Activated naive CD4-positive, alpha-beta T cell treated with anti-CD3 and anti-CD28 coated beads for 36 hours (primary cell): ENCODE measurements at regions of chr20 and their contacts with region 1.

Region 1: DNA sequence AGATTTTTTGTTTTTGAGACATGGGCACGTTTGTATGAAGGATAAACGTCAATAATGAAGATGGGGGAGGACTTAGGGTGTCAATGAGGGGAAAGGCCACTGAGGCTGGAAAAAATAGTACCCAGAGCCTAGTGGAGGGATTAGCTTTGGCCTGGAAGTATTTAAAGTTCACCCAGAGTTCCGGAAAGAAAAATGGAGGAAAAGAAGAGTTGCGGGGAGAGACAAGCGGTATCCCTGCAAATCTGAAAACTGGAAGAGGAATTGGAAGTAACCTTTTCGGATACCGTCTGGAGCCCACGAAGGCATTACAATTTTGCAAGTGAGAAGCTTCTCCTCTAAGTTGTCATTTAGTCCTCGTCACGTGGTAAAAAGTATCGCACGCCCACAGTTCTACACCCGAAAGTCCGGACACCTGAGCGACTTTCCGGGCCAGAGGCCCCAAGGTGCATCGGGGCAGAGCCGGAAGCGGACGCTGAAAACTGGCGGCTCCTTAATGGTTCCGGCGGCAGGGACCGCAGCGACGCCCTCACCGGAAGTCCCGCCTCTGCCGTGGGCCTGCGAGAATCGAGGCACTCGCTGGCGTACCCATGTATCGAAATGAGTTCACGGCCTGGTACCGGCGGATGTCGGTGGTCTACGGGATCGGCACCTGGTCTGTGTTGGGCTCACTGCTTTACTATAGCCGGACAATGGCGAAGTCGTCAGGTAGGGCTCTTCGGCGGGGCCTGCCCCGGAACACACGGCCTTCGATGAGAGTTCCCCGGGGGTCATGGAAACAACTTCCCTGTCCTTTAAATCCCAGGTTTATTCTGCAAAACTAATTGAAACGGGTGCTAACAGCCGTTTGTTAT is at the start of gene SMIM26:
- DNase-seq: peak; percentile 95
- H3K4me3 Mint-ChIP-seq: peak within 1 kb of the TSS; percentile 94
- H3K27ac Mint-ChIP-seq: peak within 1 kb of the TSS; percentile 95
- H3K4me1 Mint-ChIP-seq: peaks cover 19% of the 10 kb centered on the region
- H3K27me3 Mint-ChIP-seq: no peaks in the 10 kb centered on the region
- total RNA-seq, gene SMIM26: 57.3 to 60.0 TPM

Region 2: DNA sequence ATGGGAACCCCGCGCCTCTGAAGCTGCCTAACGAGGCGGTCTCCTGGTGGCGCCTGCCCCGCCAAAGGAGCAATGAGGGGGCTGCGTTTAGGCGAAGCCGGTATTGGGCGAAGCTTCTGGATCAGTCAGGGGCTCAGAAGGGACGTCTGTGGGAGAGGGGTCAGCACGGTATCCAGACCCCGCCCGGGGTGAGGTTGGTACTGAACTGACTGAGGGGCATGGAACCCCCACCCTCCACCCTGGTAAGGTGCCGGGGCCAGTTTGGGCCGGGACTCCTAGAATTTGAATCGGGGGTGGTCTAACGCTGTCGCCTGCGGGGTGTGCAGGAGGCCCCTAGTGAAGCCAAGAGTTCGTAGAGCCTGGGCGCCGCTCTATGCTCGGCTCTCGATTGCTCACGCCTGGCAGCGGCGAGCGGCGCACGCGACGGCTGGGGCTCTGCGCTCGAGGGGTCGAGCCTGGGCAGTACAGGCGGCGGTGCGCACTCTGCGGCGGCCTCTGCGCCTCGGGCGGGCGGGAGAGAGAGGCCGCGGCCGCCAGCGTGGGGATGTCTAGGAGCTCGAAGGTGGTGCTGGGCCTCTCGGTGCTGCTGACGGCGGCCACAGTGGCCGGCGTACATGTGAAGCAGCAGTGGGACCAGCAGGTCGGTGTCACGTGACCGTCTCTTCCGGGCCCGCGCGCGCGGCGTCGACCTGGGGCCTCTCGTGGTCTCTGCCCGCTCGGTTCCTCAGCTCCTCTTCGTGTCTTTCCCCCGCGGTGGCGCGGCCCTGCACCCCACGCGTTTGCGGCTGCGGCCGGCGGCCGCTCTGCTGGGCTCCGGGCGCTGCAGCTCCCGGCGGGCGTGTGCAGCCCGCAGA is 429.5 kb before region 1 on chr20 and contains the starts of genes KAT14 and PET117:
- CTCF ChIA-PET with region 1: no interaction called
- intact Hi-C with region 1: loop called (anchors 1 kb)
- DNase-seq: peak; percentile 91
- H3K4me3 Mint-ChIP-seq: peak within 1 kb of the TSS; percentile 75
- H3K27ac Mint-ChIP-seq: peak within 1 kb of the TSS; percentile 77
- H3K4me1 Mint-ChIP-seq: peaks cover 30% of the 10 kb centered on the region
- H3K27me3 Mint-ChIP-seq: no peaks in the 10 kb centered on the region
- total RNA-seq, gene KAT14: 10.3 to 12.9 TPM
- total RNA-seq, gene PET117: 16.7 to 17.9 TPM

Region 3: GRCh38 chr20:18496740-18497592 is 70.2 kb before region 1 on chr20 and contains the start of gene RBBP9:
- CTCF ChIA-PET with region 1: no interaction called
- intact Hi-C with region 1: loop called (anchors 1 kb)
- DNase-seq: peak; percentile 88
- H3K4me3 Mint-ChIP-seq: peak within 1 kb of the TSS; percentile 91
- H3K27ac Mint-ChIP-seq: peak within 1 kb of the TSS; percentile 84
- H3K4me1 Mint-ChIP-seq: peaks cover 11% of the 10 kb centered on the region
- H3K27me3 Mint-ChIP-seq: no peaks in the 10 kb centered on the region
- total RNA-seq, gene RBBP9: 17.3 to 18.1 TPM

Region 4: DNA sequence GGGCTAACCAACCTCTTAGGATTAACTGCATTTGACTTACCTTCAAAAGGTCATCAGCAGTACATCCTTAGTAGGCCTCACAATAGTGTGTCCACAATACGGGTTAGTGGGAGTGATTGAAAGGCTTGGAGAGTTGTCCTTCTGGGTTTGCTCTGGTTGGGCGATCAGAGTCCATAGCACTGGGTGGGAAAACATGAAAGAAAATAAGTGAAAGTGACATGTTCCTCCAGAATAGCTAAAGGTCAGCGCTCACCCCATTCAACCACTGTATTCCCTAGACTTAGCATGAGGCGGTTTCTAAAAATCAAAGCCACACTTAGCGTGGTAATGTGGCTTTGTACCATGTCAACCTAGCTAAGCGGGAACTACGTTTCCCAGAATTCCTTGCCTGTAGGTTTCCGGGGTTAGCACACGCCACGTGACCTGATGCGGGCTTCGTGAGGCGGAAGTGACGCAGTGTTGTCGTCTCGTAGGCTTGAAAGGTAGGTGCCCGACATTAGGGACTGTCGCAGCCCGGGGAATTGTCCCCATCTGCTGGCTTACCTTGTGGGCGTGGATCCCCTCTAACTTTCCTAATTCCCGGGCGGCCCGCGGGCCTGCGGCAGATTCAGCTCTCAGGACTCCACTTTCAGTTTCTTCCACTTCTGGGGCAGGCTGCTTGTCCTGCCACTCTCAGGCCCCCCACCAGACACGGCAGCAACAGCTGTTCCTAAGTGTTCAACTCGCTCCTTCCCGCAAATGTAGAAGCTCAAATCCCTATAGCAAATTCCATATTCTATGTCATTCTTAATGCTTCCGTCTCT is 226.7 kb after region 1 on chr20:
- CTCF ChIA-PET with region 1: no interaction called
- intact Hi-C with region 1: loop called (anchors 1 kb)
- DNase-seq: peak; percentile 93
- H3K4me3 Mint-ChIP-seq: peak overlapping the region; percentile 91
- H3K27ac Mint-ChIP-seq: peak overlapping the region; percentile 94
- H3K4me1 Mint-ChIP-seq: peaks cover 12% of the 10 kb centered on the region
- H3K27me3 Mint-ChIP-seq: peaks cover 8% of the 10 kb centered on the region

Region 5: GRCh38 chr20:20052074-20052970 is 1485.2 kb after region 1 on chr20 and contains the starts of genes CFAP61 and CRNKL1:
- CTCF ChIA-PET with region 1: no interaction called
- intact Hi-C with region 1: loop called (anchors 10 kb)
- DNase-seq: peak; percentile 97
- H3K4me3 Mint-ChIP-seq: peak within 1 kb of the TSS; percentile 97
- H3K27ac Mint-ChIP-seq: peak within 1 kb of the TSS; percentile 96
- H3K4me1 Mint-ChIP-seq: peaks cover 14% of the 10 kb centered on the region
- H3K27me3 Mint-ChIP-seq: peaks cover 5% of the 10 kb centered on the region
- total RNA-seq, gene CFAP61: not detected
- total RNA-seq, gene CRNKL1: 14.1 to 15.7 TPM